Activated CD4-positive, alpha-beta T cell treated with anti-CD3 and anti-CD28 coated beads for 36 hours (primary cell): ENCODE measurements at regions of chr6 and their contacts with region 1.

Region 1: GRCh38 chr6:159968440-159969203 is at the start of gene IGF2R:
- DNase-seq: peak; percentile 97
- ATAC-seq: peak; percentile 91
- H3K4me3 Mint-ChIP-seq: peak within 1 kb of the TSS; percentile 93
- H3K27ac Mint-ChIP-seq: peak within 1 kb of the TSS; percentile 92
- H3K4me1 Mint-ChIP-seq: peaks cover 38% of the 10 kb centered on the region
- H3K27me3 Mint-ChIP-seq: no peaks in the 10 kb centered on the region
- total RNA-seq, gene IGF2R: 55.6 to 65.6 TPM

Region 2: DNA sequence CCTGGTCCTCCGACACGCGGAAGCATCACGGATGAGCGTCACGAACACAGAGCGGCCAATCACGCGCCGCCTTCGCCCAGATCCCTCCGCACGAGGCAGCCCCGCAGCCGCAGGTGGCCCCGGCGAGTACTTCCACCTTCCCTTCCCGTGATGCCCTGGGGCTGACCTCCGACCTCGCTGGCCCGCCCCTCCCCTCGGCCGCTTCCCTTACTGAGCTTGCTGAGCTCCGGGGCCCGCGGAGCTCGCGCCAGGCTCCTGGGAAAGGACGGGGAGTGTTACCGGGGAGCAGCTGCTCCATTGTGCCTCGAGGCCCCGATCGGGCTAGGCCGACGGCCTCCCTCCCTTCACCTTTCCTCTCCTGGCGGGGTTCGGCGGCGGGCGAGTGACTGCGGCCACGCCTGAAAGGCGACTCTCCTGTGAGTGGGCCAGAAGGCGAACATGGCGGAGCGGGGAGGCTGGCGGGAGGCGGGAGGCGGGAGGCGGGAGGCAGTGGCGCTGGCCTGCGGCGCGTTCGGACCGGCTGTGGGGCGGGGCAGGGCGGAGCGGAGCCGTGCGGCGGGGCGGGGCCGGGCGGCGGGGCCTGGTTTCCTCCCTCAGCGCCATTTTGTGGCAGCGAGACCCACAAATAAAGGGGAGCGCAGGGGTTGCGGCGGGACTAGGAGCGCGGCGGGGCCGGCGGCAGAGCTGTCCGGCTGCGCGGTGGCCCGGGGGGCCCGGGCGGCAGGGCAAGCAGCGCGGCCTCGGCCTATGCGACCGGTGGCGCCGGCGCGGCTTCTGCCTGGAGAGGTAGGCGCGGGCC is 241.5 kb before region 1 on chr6 and contains the start of gene WTAP:
- CTCF ChIA-PET with region 1: no interaction called
- POLR2A ChIA-PET with region 1: no interaction called
- intact Hi-C with region 1: loop called in 1 of 2 experiments (anchors 1 kb)
- DNase-seq: peak; percentile 99
- ATAC-seq: peak; percentile 91
- H3K4me3 Mint-ChIP-seq: peak within 1 kb of the TSS; percentile 95
- H3K27ac Mint-ChIP-seq: peak within 1 kb of the TSS; percentile 98
- H3K4me1 Mint-ChIP-seq: peaks cover 47% of the 10 kb centered on the region
- H3K27me3 Mint-ChIP-seq: no peaks in the 10 kb centered on the region
- total RNA-seq, gene WTAP: 87.2 to 91.5 TPM

Region 3: DNA sequence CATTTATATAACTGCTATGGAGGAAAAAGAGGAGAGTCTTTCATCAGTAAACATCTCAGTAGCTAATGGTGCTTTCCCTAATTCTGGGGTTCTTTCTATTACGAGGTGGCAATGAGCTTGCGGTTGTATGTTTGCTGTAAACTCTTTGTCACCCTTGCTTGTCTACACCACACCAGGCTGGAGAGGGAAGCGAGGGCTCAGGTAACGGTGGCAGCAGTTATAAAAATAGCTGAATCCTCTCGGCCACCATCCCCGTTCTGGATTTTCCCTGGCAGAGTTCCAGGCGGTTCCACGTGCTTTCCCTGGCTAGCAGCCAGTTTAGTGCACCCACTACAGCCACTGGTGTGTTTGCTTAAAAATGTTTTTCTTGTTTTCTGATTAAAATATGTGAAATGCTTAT is 38.8 kb before region 1 on chr6:
- CTCF ChIA-PET with region 1: interaction called, 5 read pairs
- POLR2A ChIA-PET with region 1: interaction called, 4 read pairs
- intact Hi-C with region 1: loop called in 1 of 2 experiments (anchors 2 kb)
- DNase-seq: peak; percentile 66
- ATAC-seq: peak; percentile 24
- H3K4me3 Mint-ChIP-seq: no peak overlapping the region
- H3K27ac Mint-ChIP-seq: peak overlapping the region; percentile 88
- H3K4me1 Mint-ChIP-seq: peaks cover 34% of the 10 kb centered on the region
- H3K27me3 Mint-ChIP-seq: peaks cover 4% of the 10 kb centered on the region

Region 4: DNA sequence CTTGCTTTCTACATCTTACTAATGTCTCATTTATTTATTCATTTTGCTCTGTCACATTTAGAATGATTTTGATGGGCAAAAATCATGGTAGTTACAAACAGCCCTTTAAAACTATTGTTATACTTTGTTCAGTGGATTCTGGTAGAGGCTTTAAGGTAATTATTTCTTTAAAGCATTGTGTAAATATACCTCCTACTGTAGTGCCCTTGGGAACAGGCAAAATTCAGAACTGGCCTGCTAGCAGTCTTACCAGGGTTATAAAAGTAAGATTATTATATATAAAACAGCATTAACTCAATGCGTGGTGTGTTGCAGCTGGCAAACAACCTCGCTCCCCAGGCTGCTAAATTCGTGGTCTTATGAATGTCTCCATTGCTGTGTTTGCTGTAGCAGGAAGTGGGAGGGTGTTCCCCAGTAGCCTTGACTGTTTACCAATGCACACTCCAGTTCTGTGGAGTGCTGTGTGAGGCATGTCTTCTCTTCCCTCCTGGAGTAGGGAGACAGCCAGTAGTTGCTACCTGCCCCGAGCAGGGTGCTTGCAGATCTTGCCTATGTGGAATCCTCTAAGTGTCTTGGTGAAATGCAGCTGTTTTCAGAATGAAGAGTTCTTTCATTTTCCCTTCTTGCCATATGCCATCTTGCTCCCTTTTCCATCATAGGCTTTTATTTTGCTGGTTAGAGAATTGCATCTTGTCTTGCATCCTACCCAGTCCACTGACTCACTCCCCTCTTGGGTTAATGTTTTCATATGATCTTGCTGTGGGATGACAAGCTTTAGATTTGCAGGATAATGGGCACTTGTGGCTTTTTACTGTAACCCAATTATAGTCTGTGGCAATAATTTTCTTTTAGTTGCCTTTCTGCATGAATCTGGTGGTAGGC is 45.6 kb after region 1 on chr6:
- CTCF ChIA-PET with region 1: interaction called, 3 read pairs
- POLR2A ChIA-PET with region 1: interaction called, 3 read pairs
- intact Hi-C with region 1: loop called in 1 of 2 experiments (anchors 2 kb)
- DNase-seq: peak; percentile 29
- ATAC-seq: peak; percentile 37
- H3K4me3 Mint-ChIP-seq: peak overlapping the region; percentile 11
- H3K27ac Mint-ChIP-seq: peak overlapping the region; percentile 81
- H3K4me1 Mint-ChIP-seq: peaks cover 55% of the 10 kb centered on the region
- H3K27me3 Mint-ChIP-seq: no peaks in the 10 kb centered on the region

Region 5: GRCh38 chr6:161273752-161274487 is 1305.3 kb after region 1 on chr6 and contains the start of gene AGPAT4:
- CTCF ChIA-PET with region 1: no interaction called
- POLR2A ChIA-PET with region 1: no interaction called
- intact Hi-C with region 1: loop called in 1 of 2 experiments (anchors 10 kb)
- DNase-seq: peak; percentile 71
- ATAC-seq: peak; percentile 98
- H3K4me3 Mint-ChIP-seq: peak within 1 kb of the TSS; percentile 70
- H3K27ac Mint-ChIP-seq: peak within 1 kb of the TSS; percentile 86
- H3K4me1 Mint-ChIP-seq: peaks cover 23% of the 10 kb centered on the region
- H3K27me3 Mint-ChIP-seq: peaks cover 6% of the 10 kb centered on the region
- total RNA-seq, gene AGPAT4: 4.7 to 5.0 TPM